ENCODE measurements at regions of chr7 and their contacts with region 1.

Region 1: DNA sequence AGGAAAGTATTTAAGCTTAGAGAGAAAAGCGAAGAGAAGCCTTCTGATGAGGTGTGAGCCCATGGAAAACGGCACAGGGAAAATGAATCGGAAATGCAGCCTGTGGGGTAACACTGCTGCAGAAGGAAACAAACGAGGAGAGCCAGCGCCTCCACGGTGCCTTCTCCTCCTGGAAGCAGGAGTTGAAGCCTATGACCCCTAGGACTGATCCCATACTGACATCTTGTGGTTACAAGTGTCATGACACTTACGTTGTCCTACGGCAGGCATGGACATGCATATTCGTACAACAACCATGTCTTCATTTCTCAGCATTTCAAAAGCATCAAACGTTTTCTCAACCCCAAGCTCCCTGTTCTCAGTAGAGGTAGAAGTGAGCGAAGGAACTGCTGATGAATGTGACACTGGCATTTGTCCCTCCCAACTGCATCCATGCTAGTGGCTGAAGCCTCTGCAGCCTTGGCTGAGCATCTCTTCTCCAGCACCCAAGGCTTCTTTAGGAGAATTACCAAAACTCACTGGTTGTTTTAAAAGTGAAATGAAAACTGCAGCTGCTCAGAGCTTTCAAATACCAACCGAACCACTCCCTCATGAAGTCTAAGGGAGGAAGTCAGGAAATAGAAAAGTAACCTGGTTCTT is 160.2 kb downstream of the JAZF1 start:
- DNase-seq: peak; percentile 76 to 77
- H3K4me3 ChIP-seq: no peak overlapping the region
- H3K4me3 Mint-ChIP-seq: peak overlapping the region; percentile 43
- H3K27ac Mint-ChIP-seq: no peak overlapping the region
- H3K4me1 ChIP-seq: peaks cover 3% of the 10 kb centered on the region; the same call in 1 of the 2 replicates
- H3K4me1 Mint-ChIP-seq: no peaks in the 10 kb centered on the region
- H3K27me3 ChIP-seq: no peaks in the 10 kb centered on the region; the same call in 1 of the 2 replicates
- H3K27me3 Mint-ChIP-seq: no peaks in the 10 kb centered on the region
- CTCF ChIP-seq: peak; percentile 87 to 88

Region 2: GRCh38 chr7:27491491-27491890 is 528.9 kb before region 1 on chr7:
- CTCF ChIA-PET with region 1: no interaction called
- POLR2A ChIA-PET with region 1: no interaction called
- intact Hi-C with region 1: no loop called
- DNase-seq: no peak
- H3K4me3 ChIP-seq: no peak overlapping the region
- H3K4me3 Mint-ChIP-seq: no peak overlapping the region
- H3K27ac Mint-ChIP-seq: no peak overlapping the region
- H3K4me1 ChIP-seq: no peaks in the 10 kb centered on the region
- H3K4me1 Mint-ChIP-seq: no peaks in the 10 kb centered on the region
- H3K27me3 ChIP-seq: no peaks in the 10 kb centered on the region
- H3K27me3 Mint-ChIP-seq: no peaks in the 10 kb centered on the region
- CTCF ChIP-seq: no peak

Region 3: DNA sequence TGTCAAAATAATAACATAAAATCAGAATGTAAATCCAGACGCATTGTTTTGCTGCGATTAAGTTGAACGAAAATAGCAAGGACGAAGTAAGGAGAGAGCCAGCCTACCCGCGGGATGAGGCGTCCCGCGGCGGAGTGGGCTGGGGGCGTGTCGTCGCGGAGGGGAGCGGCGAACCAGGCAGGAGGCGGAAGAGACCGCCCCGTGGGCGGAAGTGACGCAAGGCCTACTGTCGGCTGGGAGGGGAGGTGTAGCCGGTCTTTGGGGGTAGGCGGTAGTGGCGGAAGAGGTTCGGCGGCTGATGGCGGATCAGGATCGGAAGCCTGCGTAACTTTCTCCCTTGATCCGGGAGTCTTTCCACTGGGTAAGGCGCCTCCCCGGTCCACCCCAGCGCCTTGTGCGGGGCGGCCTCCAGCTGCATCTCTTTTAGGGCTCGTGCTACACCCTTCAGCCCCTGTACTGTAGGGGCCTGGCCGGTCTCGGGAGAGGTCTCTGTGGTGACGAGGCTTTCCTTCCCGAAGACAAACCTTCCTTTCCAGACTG is 280.4 kb before region 1 on chr7 and contains the start of gene TAX1BP1:
- CTCF ChIA-PET with region 1: no interaction called
- POLR2A ChIA-PET with region 1: no interaction called
- intact Hi-C with region 1: loop called (anchors 10 kb)
- DNase-seq: peak; percentile 95 to 96
- H3K4me3 ChIP-seq: peak within 1 kb of the TSS; percentile 88
- H3K4me3 Mint-ChIP-seq: peak within 1 kb of the TSS; percentile 86
- H3K27ac Mint-ChIP-seq: peak within 1 kb of the TSS; percentile 87
- H3K4me1 ChIP-seq: peaks cover 40% of the 10 kb centered on the region
- H3K4me1 Mint-ChIP-seq: peaks cover 23% of the 10 kb centered on the region
- H3K27me3 ChIP-seq: no peaks in the 10 kb centered on the region
- H3K27me3 Mint-ChIP-seq: no peaks in the 10 kb centered on the region
- CTCF ChIP-seq: no peak
- total RNA-seq, gene TAX1BP1: 92.4 and 96.8 TPM in 2 replicates

Region 4: GRCh38 chr7:28389504-28390395 is 369.3 kb after region 1 on chr7:
- CTCF ChIA-PET with region 1: no interaction called
- POLR2A ChIA-PET with region 1: no interaction called
- intact Hi-C with region 1: no loop called
- DNase-seq: peak in 1 of 2 experiments; percentile 50
- H3K4me3 ChIP-seq: no peak overlapping the region
- H3K4me3 Mint-ChIP-seq: peak overlapping the region; percentile 46
- H3K27ac Mint-ChIP-seq: no peak overlapping the region
- H3K4me1 ChIP-seq: no peaks in the 10 kb centered on the region; the same call in 1 of the 2 replicates
- H3K4me1 Mint-ChIP-seq: no peaks in the 10 kb centered on the region
- H3K27me3 ChIP-seq: no peaks in the 10 kb centered on the region
- H3K27me3 Mint-ChIP-seq: peaks cover 7% of the 10 kb centered on the region
- CTCF ChIP-seq: peak; percentile 67 to 78

Measured in Caco-2 (cell line).